Activated CD8-positive, alpha-beta T cell treated with anti-CD3 and anti-CD28 coated beads, Interleukin-2, amount 10 ng/mL, durations not matched to agents 7 days and 5 days (primary cell): ENCODE measurements at regions of chr10 and their contacts with region 1.

Region 1: GRCh38 chr10:3757638-3758490 is 27.1 kb downstream of the KLF6 start:
- DNase-seq: peak; percentile 72
- ATAC-seq: peak; percentile 90
- H3K4me3 Mint-ChIP-seq: peak overlapping the region; percentile 34
- H3K27ac Mint-ChIP-seq: peak overlapping the region; percentile 91
- H3K4me1 Mint-ChIP-seq: peaks cover 71% of the 10 kb centered on the region
- H3K27me3 Mint-ChIP-seq: no peaks in the 10 kb centered on the region

Region 2: GRCh38 chr10:3776796-3777571 is 19.1 kb after region 1 on chr10:
- CTCF ChIA-PET with region 1: interaction called, 9 read pairs
- POLR2A ChIA-PET with region 1: interaction called, 154 read pairs
- DNase-seq: peak; percentile 62
- ATAC-seq: peak; percentile 6
- H3K4me3 Mint-ChIP-seq: peak overlapping the region; percentile 23
- H3K27ac Mint-ChIP-seq: peak overlapping the region; percentile 64
- H3K4me1 Mint-ChIP-seq: peaks cover 63% of the 10 kb centered on the region
- H3K27me3 Mint-ChIP-seq: no peaks in the 10 kb centered on the region

Region 3: DNA sequence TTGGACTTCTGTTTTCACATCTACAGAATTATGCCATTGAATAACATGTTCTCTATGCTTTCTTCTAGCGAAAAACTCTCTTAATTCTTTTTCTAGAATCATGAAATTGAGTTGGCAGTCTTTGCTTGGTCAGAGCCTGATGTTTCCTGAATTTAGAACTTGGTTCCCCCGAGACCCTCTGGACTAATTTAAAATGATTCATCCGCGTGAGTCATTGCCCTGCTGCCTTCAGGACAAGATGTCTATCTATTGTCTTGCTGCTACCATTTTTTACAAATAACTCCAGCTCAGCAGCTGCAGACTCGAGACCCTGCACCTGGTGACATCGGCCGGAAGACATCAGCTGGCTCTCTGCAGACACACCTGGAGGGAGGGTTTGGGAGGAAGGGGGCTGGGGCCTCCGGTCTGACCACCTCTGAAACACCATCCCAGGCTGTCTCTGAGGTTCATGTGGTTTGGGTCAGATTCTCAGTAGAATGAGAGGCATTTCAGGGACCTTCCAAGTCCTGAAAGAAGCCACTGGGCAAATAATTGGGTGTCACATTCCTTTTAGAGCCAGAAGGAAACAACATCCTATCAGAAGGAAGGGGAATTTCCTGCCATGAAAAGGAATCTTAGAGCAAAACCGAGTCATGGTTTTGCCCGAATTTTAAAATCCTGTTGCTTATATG is 48.1 kb after region 1 on chr10:
- CTCF ChIA-PET with region 1: no interaction called
- POLR2A ChIA-PET with region 1: interaction called, 23 read pairs
- DNase-seq: peak; percentile 62
- ATAC-seq: peak; percentile 6
- H3K4me3 Mint-ChIP-seq: peak overlapping the region; percentile 53
- H3K27ac Mint-ChIP-seq: peak overlapping the region; percentile 98
- H3K4me1 Mint-ChIP-seq: peaks cover 56% of the 10 kb centered on the region
- H3K27me3 Mint-ChIP-seq: no peaks in the 10 kb centered on the region